ENCODE measurements at regions of chr20 and their contacts with region 1.

Region 1: GRCh38 chr20:56411759-56412472 is at the start of gene CASS4:
- DNase-seq: peak; percentile 63
- H3K4me3 ChIP-seq: peak within 1 kb of the TSS; percentile 66
- H3K27ac ChIP-seq: peak within 1 kb of the TSS; percentile 93
- H3K27me3 ChIP-seq: no peaks in the 10 kb centered on the region
- CTCF ChIP-seq: no peak
- polyA plus RNA-seq, gene CASS4: 36.8 and 41.0 TPM in 2 replicates

Region 2: DNA sequence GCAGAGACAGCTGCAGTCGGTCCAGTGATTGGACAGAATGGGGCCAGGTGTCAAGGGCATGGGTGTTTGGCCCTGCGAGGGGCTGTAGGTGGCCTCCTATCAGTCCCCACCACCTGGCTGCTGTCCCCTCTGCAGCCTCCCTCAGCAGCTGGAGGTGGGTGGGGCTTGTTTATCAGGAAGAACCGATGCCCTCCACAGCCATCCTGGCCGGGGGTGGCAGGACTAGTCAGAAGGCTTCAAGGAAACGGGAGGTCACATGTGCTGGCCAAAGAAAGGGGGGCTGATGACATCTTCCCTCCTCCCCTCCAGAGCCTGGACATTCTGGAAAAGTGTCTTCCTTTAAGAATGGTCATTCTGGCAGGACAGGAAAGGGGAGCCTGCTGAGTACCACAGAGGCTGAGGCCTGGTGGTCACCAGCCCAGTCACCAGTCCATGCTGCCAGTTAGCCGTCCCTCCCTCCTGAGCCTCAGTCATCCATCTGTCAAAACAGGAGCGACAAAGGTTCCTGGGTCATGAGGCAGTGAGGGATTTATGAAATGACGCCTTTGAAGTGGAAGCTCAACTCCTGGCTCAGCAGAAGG is 49.0 kb before region 1 on chr20:
- CTCF ChIA-PET with region 1: no interaction called
- POLR2A ChIA-PET with region 1: no interaction called
- DNase-seq: no peak
- H3K4me3 ChIP-seq: no peak overlapping the region
- H3K27ac ChIP-seq: no peak overlapping the region
- H3K27me3 ChIP-seq: no peaks in the 10 kb centered on the region
- CTCF ChIP-seq: no peak

Region 3: GRCh38 chr20:56422076-56422823 is 10.3 kb after region 1 on chr20:
- CTCF ChIA-PET with region 1: interaction called, 3 read pairs
- POLR2A ChIA-PET with region 1: interaction called, 16 read pairs
- DNase-seq: peak; percentile 51
- H3K4me3 ChIP-seq: no peak overlapping the region
- H3K27ac ChIP-seq: peak overlapping the region; percentile 78
- H3K27me3 ChIP-seq: no peaks in the 10 kb centered on the region
- CTCF ChIP-seq: no peak

Region 4: DNA sequence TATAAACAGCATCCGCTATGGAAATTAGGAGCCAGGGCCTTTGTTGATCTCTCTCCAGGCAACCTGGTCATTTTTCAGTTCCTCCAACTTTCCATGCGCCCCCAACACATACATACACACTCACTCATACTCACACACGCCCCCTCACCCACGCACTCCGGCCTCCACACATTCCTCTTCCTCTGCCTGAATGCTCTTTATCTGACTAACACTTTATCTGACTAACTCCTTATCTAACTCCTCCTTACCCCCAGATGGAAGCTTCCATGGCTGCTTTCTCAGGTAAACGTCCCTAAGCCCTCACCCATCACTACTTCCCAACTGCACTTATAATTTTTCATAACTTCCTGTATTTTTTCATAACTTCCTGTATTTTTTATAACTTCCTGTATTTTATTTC is 17.6 kb after region 1 on chr20:
- CTCF ChIA-PET with region 1: interaction called, 3 read pairs
- POLR2A ChIA-PET with region 1: interaction called, 20 read pairs
- DNase-seq: no peak
- H3K4me3 ChIP-seq: no peak overlapping the region
- H3K27ac ChIP-seq: peak overlapping the region; percentile 91
- H3K27me3 ChIP-seq: no peaks in the 10 kb centered on the region
- CTCF ChIP-seq: no peak

Measured in AG04450 (cell line).